PC-3 (cell line): ENCODE measurements at regions of chr6 and their contacts with region 1.

Region 1: DNA sequence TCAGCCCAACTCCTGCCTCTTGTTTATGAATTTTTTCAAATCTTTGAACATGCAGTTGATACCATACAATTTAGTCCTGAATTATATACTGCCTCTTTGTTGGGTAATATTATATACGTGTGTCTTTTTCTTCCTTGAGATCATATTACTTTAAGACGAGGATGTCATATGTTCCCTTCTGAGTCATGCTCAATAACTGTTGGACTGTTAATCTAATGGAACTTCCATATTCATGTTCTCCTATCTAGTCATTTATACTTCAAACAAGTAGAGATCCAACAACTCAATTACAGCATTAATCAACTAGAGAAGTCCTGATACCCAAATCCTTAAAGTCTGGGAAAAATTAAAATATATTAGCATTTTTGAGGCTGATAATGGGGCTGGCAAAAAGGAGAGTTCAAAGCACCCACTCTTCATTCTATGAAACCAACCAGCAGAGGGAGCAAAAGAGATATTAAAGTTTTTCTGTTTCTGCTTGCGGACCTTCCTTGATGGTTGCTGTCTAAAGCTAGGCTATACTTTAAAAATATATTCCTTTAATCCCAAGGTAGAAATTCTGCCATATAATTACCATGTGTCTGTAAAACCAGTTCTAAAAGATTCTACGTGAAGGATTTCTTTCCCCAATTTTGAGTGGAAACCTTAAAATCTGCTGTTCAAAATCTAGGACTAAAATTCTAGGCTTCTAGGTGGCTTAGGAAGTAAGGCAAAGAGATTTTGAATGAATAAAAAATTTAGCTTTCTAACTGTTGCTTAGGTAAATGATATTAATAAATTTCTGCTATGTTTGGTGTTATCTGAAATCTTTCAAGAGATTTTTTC is 498.9 kb downstream of the BCKDHB start:
- DNase-seq: peak; percentile 58
- ATAC-seq: peak; percentile 48
- H3K4me3 ChIP-seq: no peak overlapping the region
- H3K27ac ChIP-seq: 0 out of 2 replicates have a peak overlapping the region, but pooled peaks have one; percentile 11
- H3K4me1 ChIP-seq: peaks cover 32% of the 10 kb centered on the region
- H3K27me3 ChIP-seq: no peaks in the 10 kb centered on the region
- CTCF ChIP-seq: peak; percentile 79

Region 2: GRCh38 chr6:80214436-80215022 is 390.8 kb before region 1 on chr6:
- CTCF ChIA-PET with region 1: no interaction called
- POLR2A ChIA-PET with region 1: no interaction called
- intact Hi-C with region 1: loop called (anchors 10 kb)
- DNase-seq: peak; percentile 67
- ATAC-seq: peak; percentile 86
- H3K4me3 ChIP-seq: no peak overlapping the region
- H3K27ac ChIP-seq: no peak overlapping the region
- H3K4me1 ChIP-seq: 0 out of 2 replicates have a peak, but pooled peaks cover 2% of the 10 kb centered on the region
- H3K27me3 ChIP-seq: no peaks in the 10 kb centered on the region
- CTCF ChIP-seq: peak; percentile 70

Region 3: DNA sequence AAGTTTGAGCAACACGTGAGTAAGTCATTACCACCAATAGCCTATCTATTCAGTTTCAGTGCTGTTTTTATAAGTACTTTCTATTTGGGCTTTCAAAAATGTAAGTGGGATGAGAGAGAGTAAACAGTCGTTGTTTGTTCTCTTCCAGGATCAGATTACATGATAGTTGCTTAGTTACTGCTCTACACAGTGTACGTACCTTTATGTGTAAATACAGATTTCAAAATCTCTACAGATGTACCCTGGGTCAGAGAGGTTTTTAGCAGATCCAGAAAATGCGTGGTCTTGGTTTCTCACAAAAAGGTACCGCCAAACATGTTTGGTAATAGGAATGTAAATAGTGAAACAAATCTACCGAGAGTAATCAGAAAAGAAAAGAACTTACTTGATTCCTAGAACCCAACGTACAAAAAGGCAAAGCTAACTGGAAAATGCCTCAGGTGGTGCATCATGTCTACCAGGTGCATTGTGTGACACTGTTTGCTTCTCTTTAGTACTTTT is 77.8 kb before region 1 on chr6:
- CTCF ChIA-PET with region 1: no interaction called
- POLR2A ChIA-PET with region 1: no interaction called
- intact Hi-C with region 1: loop called (anchors 5 kb)
- DNase-seq: peak; percentile 86
- ATAC-seq: peak; percentile 98
- H3K4me3 ChIP-seq: no peak overlapping the region
- H3K27ac ChIP-seq: peak overlapping the region; percentile 61
- H3K4me1 ChIP-seq: peaks cover 20% of the 10 kb centered on the region
- H3K27me3 ChIP-seq: no peaks in the 10 kb centered on the region
- CTCF ChIP-seq: no peak

Region 4: DNA sequence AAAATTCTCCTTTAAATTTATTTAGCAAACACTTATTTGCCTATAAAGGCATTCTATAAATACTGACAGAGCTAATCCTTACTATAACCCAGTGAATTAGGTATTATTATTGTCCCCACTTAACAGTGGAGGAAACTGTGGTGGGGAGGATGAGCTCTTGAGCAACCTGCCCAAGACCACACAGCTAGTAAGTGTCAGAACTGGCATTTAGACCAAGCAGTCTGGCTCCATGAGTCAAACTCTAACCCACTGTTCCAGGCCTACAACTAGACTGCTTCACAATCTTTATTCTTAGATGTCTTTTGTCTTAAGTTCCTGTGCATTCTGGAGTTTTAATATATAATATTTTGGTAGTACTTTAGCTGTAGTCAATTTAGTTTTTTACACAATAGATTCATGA is 31.9 kb after region 1 on chr6:
- CTCF ChIA-PET with region 1: no interaction called
- POLR2A ChIA-PET with region 1: no interaction called
- intact Hi-C with region 1: no loop called
- DNase-seq: no peak
- ATAC-seq: no peak
- H3K4me3 ChIP-seq: no peak overlapping the region
- H3K27ac ChIP-seq: no peak overlapping the region
- H3K4me1 ChIP-seq: peaks cover 24% of the 10 kb centered on the region
- H3K27me3 ChIP-seq: no peaks in the 10 kb centered on the region
- CTCF ChIP-seq: no peak

Region 5: GRCh38 chr6:80725156-80725930 is 120.0 kb after region 1 on chr6:
- CTCF ChIA-PET with region 1: no interaction called
- POLR2A ChIA-PET with region 1: no interaction called
- intact Hi-C with region 1: loop called (anchors 5 kb)
- DNase-seq: peak; percentile 39
- ATAC-seq: peak; percentile 88
- H3K4me3 ChIP-seq: no peak overlapping the region
- H3K27ac ChIP-seq: no peak overlapping the region
- H3K4me1 ChIP-seq: peaks cover 8% of the 10 kb centered on the region; the same call in 1 of the 2 replicates
- H3K27me3 ChIP-seq: no peaks in the 10 kb centered on the region
- CTCF ChIP-seq: no peak

Region 6: GRCh38 chr6:80742481-80742880 is 137.1 kb after region 1 on chr6:
- CTCF ChIA-PET with region 1: no interaction called
- POLR2A ChIA-PET with region 1: no interaction called
- intact Hi-C with region 1: loop called (anchors 5 kb)
- DNase-seq: peak; percentile 45
- ATAC-seq: peak; percentile 49
- H3K4me3 ChIP-seq: no peak overlapping the region
- H3K27ac ChIP-seq: no peak overlapping the region
- H3K4me1 ChIP-seq: no peaks in the 10 kb centered on the region
- H3K27me3 ChIP-seq: no peaks in the 10 kb centered on the region
- CTCF ChIP-seq: peak; percentile 56